ENCODE measurements at regions of chr12 and their contacts with region 1.

Region 1: DNA sequence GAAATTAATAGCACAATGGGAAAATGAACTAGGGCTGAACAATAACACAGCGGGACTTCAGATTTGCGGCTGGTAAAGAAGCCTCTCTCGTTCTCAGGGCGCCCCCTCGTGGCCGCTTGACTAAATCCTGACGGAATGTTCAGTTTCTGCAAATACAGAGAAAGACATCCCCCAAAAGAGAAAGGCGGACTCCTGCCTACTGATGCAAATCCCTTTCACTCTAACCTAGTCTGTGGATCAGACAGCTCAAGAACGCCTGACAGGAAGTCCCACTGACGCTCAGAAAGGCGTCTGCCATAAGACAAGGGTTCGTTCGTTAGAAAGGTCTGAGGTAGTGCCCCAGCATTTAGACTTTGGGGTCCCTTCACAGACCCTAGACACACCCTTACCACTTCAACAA is 2.5 kb downstream of the NUAK1 start:
- DNase-seq: peak; percentile 88
- ATAC-seq: peak; percentile 47
- H3K4me3 Mint-ChIP-seq: no peak overlapping the region
- H3K27ac Mint-ChIP-seq: no peak overlapping the region
- H3K4me1 Mint-ChIP-seq: peaks cover 7% of the 10 kb centered on the region
- H3K27me3 Mint-ChIP-seq: peaks cover 62% of the 10 kb centered on the region

Region 2: GRCh38 chr12:105420659-105421240 is 715.5 kb before region 1 on chr12:
- CTCF ChIA-PET with region 1: interaction called, 30 read pairs
- POLR2A ChIA-PET with region 1: interaction called, 3 read pairs
- intact Hi-C with region 1: loop called (anchors 1 kb)
- DNase-seq: peak; percentile 83
- ATAC-seq: peak; percentile 73
- H3K4me3 Mint-ChIP-seq: no peak overlapping the region
- H3K27ac Mint-ChIP-seq: no peak overlapping the region
- H3K4me1 Mint-ChIP-seq: peaks cover 13% of the 10 kb centered on the region
- H3K27me3 Mint-ChIP-seq: peaks cover under 1% of the 10 kb centered on the region

Region 3: DNA sequence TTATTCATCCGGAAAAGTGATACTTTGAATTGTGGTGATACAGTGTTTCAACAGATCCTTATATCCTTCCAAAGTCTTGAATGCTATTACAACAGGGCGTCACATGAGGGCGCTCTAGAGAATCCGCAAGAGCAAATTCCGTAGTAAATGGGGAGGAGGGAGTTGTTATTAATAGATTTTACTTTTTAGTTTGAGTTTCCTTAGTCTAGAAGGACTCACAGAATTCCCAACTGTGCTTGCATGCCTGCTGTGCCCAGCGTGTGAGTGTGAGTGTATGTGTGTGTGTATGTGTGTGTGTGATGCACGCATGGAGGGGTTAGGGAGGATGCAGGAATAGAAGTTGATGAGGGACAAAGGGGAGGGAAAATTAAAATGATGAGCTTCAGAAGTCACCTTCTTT is 430.5 kb before region 1 on chr12:
- CTCF ChIA-PET with region 1: interaction called, 4 read pairs
- POLR2A ChIA-PET with region 1: no interaction called
- intact Hi-C with region 1: loop called (anchors 1 to 10 kb)
- DNase-seq: peak; percentile 46
- ATAC-seq: no peak
- H3K4me3 Mint-ChIP-seq: no peak overlapping the region
- H3K27ac Mint-ChIP-seq: no peak overlapping the region
- H3K4me1 Mint-ChIP-seq: no peaks in the 10 kb centered on the region
- H3K27me3 Mint-ChIP-seq: no peaks in the 10 kb centered on the region

Region 4: GRCh38 chr12:106084014-106084671 is 52.1 kb before region 1 on chr12:
- CTCF ChIA-PET with region 1: no interaction called
- POLR2A ChIA-PET with region 1: no interaction called
- intact Hi-C with region 1: no loop called
- DNase-seq: no peak
- ATAC-seq: no peak
- H3K4me3 Mint-ChIP-seq: no peak overlapping the region
- H3K27ac Mint-ChIP-seq: no peak overlapping the region
- H3K4me1 Mint-ChIP-seq: no peaks in the 10 kb centered on the region
- H3K27me3 Mint-ChIP-seq: peaks cover 26% of the 10 kb centered on the region

Region 5: DNA sequence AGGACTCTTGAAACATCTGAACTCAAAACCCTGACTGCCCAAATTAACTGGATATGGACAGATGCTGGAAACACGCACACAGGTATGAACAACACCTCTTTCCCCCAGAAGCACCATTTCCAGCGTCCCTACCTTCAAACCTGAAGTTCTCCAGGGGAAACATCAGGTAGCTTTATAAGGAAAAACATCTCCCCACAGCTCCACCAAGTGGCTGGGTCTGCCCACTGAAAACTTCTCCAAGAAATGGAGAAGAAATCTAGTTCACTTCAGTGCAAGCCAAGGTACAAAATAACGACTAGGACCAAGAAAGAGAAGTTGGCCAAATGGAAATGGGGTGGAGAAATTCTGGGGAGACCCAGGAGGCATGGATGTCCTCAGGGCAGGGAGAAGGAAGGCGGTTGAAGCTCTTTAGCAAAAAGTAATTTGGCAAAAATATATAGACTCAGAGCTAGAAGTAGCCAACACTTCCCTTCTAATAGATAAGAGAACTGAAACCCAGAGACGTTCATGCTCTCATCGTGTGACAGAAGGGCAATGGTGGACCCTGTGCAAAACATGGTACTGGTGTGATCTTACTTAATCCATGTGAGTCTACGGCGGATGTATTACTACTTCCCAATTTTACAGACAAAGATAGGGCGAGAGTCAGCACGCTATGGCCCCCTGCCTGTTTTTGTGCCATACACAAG is 13.0 kb after region 1 on chr12:
- CTCF ChIA-PET with region 1: interaction called, 12 read pairs
- POLR2A ChIA-PET with region 1: no interaction called
- intact Hi-C with region 1: no loop called
- DNase-seq: peak; percentile 26
- ATAC-seq: no peak
- H3K4me3 Mint-ChIP-seq: no peak overlapping the region
- H3K27ac Mint-ChIP-seq: no peak overlapping the region
- H3K4me1 Mint-ChIP-seq: no peaks in the 10 kb centered on the region
- H3K27me3 Mint-ChIP-seq: peaks cover 25% of the 10 kb centered on the region

Measured in activated CD4-positive, alpha-beta T cell treated with anti-CD3 and anti-CD28 coated beads for 36 hours (primary cell).